CD8-positive, alpha-beta memory T cell (primary cell): ENCODE measurements at regions of chr7 and their contacts with region 1.

Region 1: GRCh38 chr7:35707422-35707821 is 12.5 kb upstream of the HERPUD2 start:
- DNase-seq: no peak
- H3K4me3 ChIP-seq: no peak overlapping the region
- H3K4me3 Mint-ChIP-seq: no peak overlapping the region
- H3K27ac ChIP-seq: no peak overlapping the region
- H3K27ac Mint-ChIP-seq: peak overlapping the region in 2 of 8 donors; percentile 2 to 47
- H3K4me1 ChIP-seq: peaks cover 13% of the 10 kb centered on the region
- H3K4me1 Mint-ChIP-seq: peaks cover 17 to 31% (median 29%) of the 10 kb centered on the region in 3 donors
- H3K27me3 ChIP-seq: no peaks in the 10 kb centered on the region
- H3K27me3 Mint-ChIP-seq: no peaks in the 10 kb centered on the region

Region 2: DNA sequence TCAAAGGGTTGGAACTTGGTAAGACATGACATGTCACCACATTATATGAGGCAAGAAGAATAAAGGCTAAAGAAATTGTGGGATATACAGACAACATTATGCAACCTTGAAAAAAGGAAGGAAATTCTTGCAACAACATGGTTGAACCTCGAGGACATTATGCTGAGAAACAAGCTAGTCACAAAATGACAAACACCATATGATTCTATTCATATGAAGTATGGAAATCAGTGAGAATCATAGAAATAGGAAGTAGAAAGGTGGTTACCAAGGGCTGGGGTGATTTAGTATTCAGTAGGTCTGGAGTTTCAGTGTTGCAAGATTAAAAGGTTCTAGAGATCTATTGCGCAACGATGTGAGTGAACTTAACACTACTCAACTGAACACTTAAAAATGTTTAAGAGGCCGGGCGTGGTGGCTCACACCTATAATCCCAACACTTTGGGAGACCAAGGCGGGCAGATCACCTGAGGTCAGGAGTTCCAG is 326.6 kb before region 1 on chr7:
- CTCF ChIA-PET with region 1: no interaction called
- POLR2A ChIA-PET with region 1: no interaction called
- DNase-seq: no peak
- H3K4me3 ChIP-seq: no peak overlapping the region
- H3K4me3 Mint-ChIP-seq: no peak overlapping the region
- H3K27ac ChIP-seq: no peak overlapping the region
- H3K27ac Mint-ChIP-seq: no peak overlapping the region
- H3K4me1 ChIP-seq: no peaks in the 10 kb centered on the region
- H3K4me1 Mint-ChIP-seq: no peaks in the 10 kb centered on the region
- H3K27me3 ChIP-seq: no peaks in the 10 kb centered on the region
- H3K27me3 Mint-ChIP-seq: peaks cover 2 to 16% of the 10 kb centered on the region in 2 donors

Region 3: GRCh38 chr7:35401217-35401879 is 306.1 kb before region 1 on chr7:
- CTCF ChIA-PET with region 1: no interaction called
- POLR2A ChIA-PET with region 1: no interaction called
- DNase-seq: no peak
- H3K4me3 ChIP-seq: no peak overlapping the region
- H3K4me3 Mint-ChIP-seq: no peak overlapping the region
- H3K27ac ChIP-seq: no peak overlapping the region
- H3K27ac Mint-ChIP-seq: no peak overlapping the region
- H3K4me1 ChIP-seq: no peaks in the 10 kb centered on the region
- H3K4me1 Mint-ChIP-seq: no peaks in the 10 kb centered on the region
- H3K27me3 ChIP-seq: no peaks in the 10 kb centered on the region
- H3K27me3 Mint-ChIP-seq: peaks cover 3 to 26% of the 10 kb centered on the region in 2 donors

Region 4: GRCh38 chr7:35906191-35906908 is 198.9 kb after region 1 on chr7:
- CTCF ChIA-PET with region 1: interaction called, 13 read pairs
- POLR2A ChIA-PET with region 1: no interaction called
- DNase-seq: peak; percentile 27 to 78 (median 65)
- H3K4me3 ChIP-seq: no peak overlapping the region
- H3K4me3 Mint-ChIP-seq: no peak overlapping the region
- H3K27ac ChIP-seq: no peak overlapping the region
- H3K27ac Mint-ChIP-seq: peak overlapping the region in 7 of 8 donors; percentile 32 to 87 (median 52)
- H3K4me1 ChIP-seq: no peaks in the 10 kb centered on the region
- H3K4me1 Mint-ChIP-seq: peaks cover 6 to 7% (median 7%) of the 10 kb centered on the region in 3 donors
- H3K27me3 ChIP-seq: no peaks in the 10 kb centered on the region
- H3K27me3 Mint-ChIP-seq: no peaks in the 10 kb centered on the region